IMR-90 (cell line): ENCODE measurements at regions of chr19 and their contacts with region 1.

Region 1: GRCh38 chr19:33186431-33187182 is 7.5 kb upstream of the LRP3 start:
- DNase-seq: no peak
- ATAC-seq: no peak
- H3K4me3 ChIP-seq: no peak overlapping the region
- H3K27ac ChIP-seq: no peak overlapping the region
- H3K4me1 ChIP-seq: no peaks in the 10 kb centered on the region
- H3K27me3 ChIP-seq: peaks cover 5% of the 10 kb centered on the region; the same call in 1 of the 2 replicates
- CTCF ChIP-seq: no peak
- POLR2A ChIP-seq: no peak
- RAD21 ChIP-seq: no peak

Region 2: GRCh38 chr19:33125929-33126388 is 60.6 kb before region 1 on chr19:
- CTCF ChIA-PET with region 1: interaction called, 12 read pairs
- POLR2A ChIA-PET with region 1: no interaction called
- dilution Hi-C with region 1: no loop called
- in situ Hi-C with region 1: loop called (anchors 10 kb)
- intact Hi-C with region 1: loop called (anchors 1 kb)
- DNase-seq: peak; percentile 69
- ATAC-seq: peak; percentile 99
- H3K4me3 ChIP-seq: no peak overlapping the region
- H3K27ac ChIP-seq: no peak overlapping the region
- H3K4me1 ChIP-seq: no peaks in the 10 kb centered on the region
- H3K27me3 ChIP-seq: no peaks in the 10 kb centered on the region
- CTCF ChIP-seq: peak; percentile 83
- POLR2A ChIP-seq: no peak
- RAD21 ChIP-seq: peak; percentile 76

Region 3: DNA sequence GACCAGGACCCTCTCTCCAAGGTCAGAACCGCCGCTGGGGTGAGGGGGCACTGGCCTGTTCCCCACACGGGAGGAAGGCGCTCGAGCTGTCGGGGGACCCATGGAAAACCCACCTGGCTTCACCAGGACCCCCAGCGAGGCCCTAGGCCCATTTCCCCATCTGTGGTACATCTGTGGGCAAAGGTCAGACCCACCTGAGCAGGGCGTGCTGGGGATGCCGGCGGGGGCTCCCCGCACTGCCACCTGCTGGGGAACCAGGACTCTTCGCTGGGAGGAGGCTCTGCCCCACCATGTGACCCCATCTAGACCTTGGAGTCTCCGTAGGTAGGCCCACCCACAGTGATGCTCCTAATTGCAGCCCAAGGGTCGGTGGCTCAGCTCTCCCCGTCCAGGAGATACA is 54.2 kb before region 1 on chr19:
- CTCF ChIA-PET with region 1: interaction called, 3 read pairs
- POLR2A ChIA-PET with region 1: no interaction called
- dilution Hi-C with region 1: no loop called
- in situ Hi-C with region 1: loop called (anchors 10 kb)
- intact Hi-C with region 1: no loop called
- DNase-seq: no peak
- ATAC-seq: no peak
- H3K4me3 ChIP-seq: no peak overlapping the region
- H3K27ac ChIP-seq: no peak overlapping the region
- H3K4me1 ChIP-seq: peaks cover 2% of the 10 kb centered on the region; the same call in 1 of the 2 replicates
- H3K27me3 ChIP-seq: no peaks in the 10 kb centered on the region
- CTCF ChIP-seq: 0 out of 2 replicates have a peak, but pooled peaks have one; percentile 19
- POLR2A ChIP-seq: no peak
- RAD21 ChIP-seq: no peak

Region 4: GRCh38 chr19:33143897-33144405 is 42.7 kb before region 1 on chr19:
- CTCF ChIA-PET with region 1: interaction called, 13 read pairs
- POLR2A ChIA-PET with region 1: no interaction called
- dilution Hi-C with region 1: no loop called
- in situ Hi-C with region 1: loop called (anchors 10 kb)
- intact Hi-C with region 1: loop called (anchors 1 kb)
- DNase-seq: peak; percentile 42
- ATAC-seq: peak; percentile 99
- H3K4me3 ChIP-seq: no peak overlapping the region
- H3K27ac ChIP-seq: no peak overlapping the region
- H3K4me1 ChIP-seq: no peaks in the 10 kb centered on the region; the same call in 1 of the 2 replicates
- H3K27me3 ChIP-seq: peaks cover 2% of the 10 kb centered on the region; the same call in 1 of the 2 replicates
- CTCF ChIP-seq: peak; percentile 90
- POLR2A ChIP-seq: no peak
- RAD21 ChIP-seq: peak; percentile 87

Region 5: GRCh38 chr19:33219261-33219812 is 32.7 kb after region 1 on chr19:
- CTCF ChIA-PET with region 1: no interaction called
- POLR2A ChIA-PET with region 1: no interaction called
- dilution Hi-C with region 1: no loop called
- in situ Hi-C with region 1: no loop called
- intact Hi-C with region 1: no loop called
- DNase-seq: peak; percentile 39
- ATAC-seq: no peak; the same call in 1 of the 2 replicates
- H3K4me3 ChIP-seq: no peak overlapping the region
- H3K27ac ChIP-seq: no peak overlapping the region
- H3K4me1 ChIP-seq: no peaks in the 10 kb centered on the region
- H3K27me3 ChIP-seq: peaks cover 38% of the 10 kb centered on the region
- CTCF ChIP-seq: 0 out of 2 replicates have a peak, but pooled peaks have one; percentile 17
- POLR2A ChIP-seq: no peak
- RAD21 ChIP-seq: no peak